Left cardiac atrium (tissue), 4 donors: ENCODE measurements at regions of chr9 and their contacts with region 1.

Region 1: DNA sequence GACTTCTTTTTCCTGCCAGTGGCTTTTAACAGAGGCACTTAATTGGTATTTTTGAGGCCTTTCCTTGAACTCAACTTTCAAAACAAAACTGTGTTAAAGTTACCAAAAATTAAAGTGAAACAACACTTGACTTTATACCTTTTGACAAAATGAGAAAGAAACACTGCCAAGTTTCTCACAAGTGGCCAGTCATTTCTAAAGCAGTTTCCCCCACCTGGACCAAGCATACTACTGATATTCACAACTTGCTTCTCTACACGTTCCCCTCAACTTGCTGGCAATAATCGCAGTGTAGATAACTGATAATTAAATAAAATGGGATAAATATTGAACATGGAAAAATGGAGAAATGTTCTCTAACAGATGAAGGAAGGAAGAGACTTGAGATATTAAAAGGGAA is 135.7 kb downstream of the TLR4 start:
- DNase-seq: no peak
- ATAC-seq: no peak

Region 2: GRCh38 chr9:117907420-117907819 is 67.6 kb after region 1 on chr9:
- intact Hi-C with region 1: loop called in 1 of 2 experiments (anchors 2 kb)
- DNase-seq: no peak
- ATAC-seq: no peak